ENCODE measurements at regions of chrX and their contacts with region 1.

Region 1: GRCh38 chrX:3119376-3119775 is 78.1 kb downstream of the ARSF start:
- DNase-seq: no peak
- H3K4me3 ChIP-seq: no peak overlapping the region
- H3K27ac ChIP-seq: no peak overlapping the region
- H3K27me3 ChIP-seq: peaks cover 0 to 13% (median 0%) of the 10 kb centered on the region in 45 donors
- CTCF ChIP-seq: no peak

Region 2: DNA sequence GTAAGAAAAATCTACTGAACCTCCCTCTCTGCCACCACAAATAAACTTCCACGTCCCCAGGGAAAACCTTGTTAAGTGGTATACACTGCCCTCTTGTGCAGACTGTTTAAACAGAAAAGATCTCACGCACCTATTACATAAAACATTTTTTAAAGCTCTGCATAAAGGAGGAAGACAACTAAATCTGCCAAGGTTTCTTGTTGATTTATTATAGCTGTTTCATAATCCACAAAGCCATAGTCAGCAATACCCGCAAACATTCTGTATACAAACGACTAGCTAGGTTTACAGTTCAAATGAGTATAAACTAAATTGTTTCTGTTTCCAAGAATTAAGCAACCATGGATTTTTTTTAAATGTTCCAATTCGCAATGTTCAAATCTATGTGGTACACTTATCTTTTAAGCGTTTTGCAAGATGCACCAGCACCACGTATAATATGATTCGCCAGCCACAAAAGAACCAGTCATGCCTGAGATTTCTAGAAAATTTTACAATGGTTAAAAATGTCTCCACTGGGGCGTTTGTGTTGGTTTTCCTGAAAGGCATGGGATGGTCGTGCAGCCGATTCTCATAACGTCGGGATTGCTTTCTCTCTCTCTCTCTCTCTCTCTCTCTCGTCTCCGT is 429.5 kb after region 1 on chrX:
- intact Hi-C with region 1: loop called in 1 of 2 experiments (anchors 10 kb)
- DNase-seq: no peak
- H3K4me3 ChIP-seq: peak overlapping the region in 54 of 59 donors; percentile 0 to 59 (median 34)
- H3K27ac ChIP-seq: peak overlapping the region in 14 of 59 donors; percentile 7 to 64 (median 42)
- H3K27me3 ChIP-seq: peaks cover 0 to 28% (median 4%) of the 10 kb centered on the region in 45 donors
- CTCF ChIP-seq: peak in 42 of 56 donors; percentile 11 to 60 (median 28)

Region 3: GRCh38 chrX:3638280-3638873 is 519.0 kb after region 1 on chrX:
- intact Hi-C with region 1: loop called in 1 of 2 experiments (anchors 5 kb)
- DNase-seq: peak in 6 of 10 donors; percentile 11 to 57 (median 50)
- H3K4me3 ChIP-seq: no peak overlapping the region
- H3K27ac ChIP-seq: no peak overlapping the region
- H3K27me3 ChIP-seq: peaks cover 0 to 14% (median 0%) of the 10 kb centered on the region in 45 donors
- CTCF ChIP-seq: peak; percentile 19 to 79 (median 61)

Measured in dorsolateral prefrontal cortex (tissue), 120 donors.